ENCODE measurements at regions of chr10 and their contacts with region 1.

Region 1: GRCh38 chr10:89263531-89263930 is 12.0 kb upstream of the LIPA start:
- DNase-seq: no peak
- H3K4me3 ChIP-seq: no peak overlapping the region
- H3K27ac ChIP-seq: peak overlapping the region in 1 of 2 experiments; percentile 75; a peak in 3 of 4 replicates
- H3K4me1 ChIP-seq: peaks cover 5 to 26% of the 10 kb centered on the region in 2 experiments
- H3K27me3 ChIP-seq: no peaks in the 10 kb centered on the region
- CTCF ChIP-seq: no peak
- EP300 ChIP-seq: no peak
- RAD21 ChIP-seq: no peak

Region 2: DNA sequence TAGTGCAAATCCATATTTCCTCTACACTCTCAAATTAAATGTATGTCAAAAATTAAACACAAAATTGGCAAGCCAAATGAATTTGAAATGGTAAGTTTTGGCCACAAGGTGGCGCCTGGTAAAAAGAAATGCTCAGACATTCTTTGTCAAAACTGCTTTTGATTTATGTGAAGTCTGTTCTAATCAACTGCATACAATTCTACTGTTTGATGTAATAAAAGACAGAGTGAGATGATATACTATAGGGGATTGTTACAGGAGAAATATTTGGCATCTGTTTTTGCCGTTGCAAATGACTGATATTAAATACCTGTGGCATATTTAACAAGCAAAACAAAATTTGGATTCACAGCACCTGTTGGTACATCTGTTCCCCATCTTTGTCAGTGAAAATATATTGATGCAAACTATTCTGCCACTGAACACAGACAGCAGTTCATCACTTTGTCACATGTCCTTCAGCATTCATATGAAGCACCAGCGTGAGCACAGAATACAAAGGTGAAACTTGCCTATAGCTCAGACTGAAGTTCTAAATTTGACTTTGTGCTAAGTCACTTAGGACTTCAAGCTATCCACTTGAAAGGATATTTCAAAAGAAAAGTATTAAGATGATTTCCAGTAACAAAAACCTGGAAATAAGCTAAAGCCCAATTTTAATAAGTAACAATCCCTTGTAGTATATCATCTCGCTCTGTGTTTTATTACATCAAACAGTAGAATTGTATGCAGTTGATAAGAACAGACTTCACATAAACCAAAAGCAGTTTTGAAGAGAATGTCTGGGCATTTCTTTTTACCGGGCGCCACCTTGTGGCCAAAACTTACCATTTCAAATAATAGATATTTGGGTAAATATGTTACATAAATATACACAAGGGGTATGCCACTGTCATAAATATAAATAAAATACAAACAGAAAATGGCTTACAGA is 46.2 kb before region 1 on chr10:
- CTCF ChIA-PET with region 1: no interaction called
- POLR2A ChIA-PET with region 1: no interaction called
- DNase-seq: peak; percentile 30
- H3K4me3 ChIP-seq: no peak overlapping the region; a peak in 1 of 4 replicates
- H3K27ac ChIP-seq: peak overlapping the region; percentile 30 to 55
- H3K4me1 ChIP-seq: peaks cover 4 to 14% of the 10 kb centered on the region in 2 experiments; a peak in 3 of 4 replicates
- H3K27me3 ChIP-seq: no peaks in the 10 kb centered on the region
- CTCF ChIP-seq: peak; percentile 91
- EP300 ChIP-seq: no peak
- RAD21 ChIP-seq: peak; percentile 78

Region 3: DNA sequence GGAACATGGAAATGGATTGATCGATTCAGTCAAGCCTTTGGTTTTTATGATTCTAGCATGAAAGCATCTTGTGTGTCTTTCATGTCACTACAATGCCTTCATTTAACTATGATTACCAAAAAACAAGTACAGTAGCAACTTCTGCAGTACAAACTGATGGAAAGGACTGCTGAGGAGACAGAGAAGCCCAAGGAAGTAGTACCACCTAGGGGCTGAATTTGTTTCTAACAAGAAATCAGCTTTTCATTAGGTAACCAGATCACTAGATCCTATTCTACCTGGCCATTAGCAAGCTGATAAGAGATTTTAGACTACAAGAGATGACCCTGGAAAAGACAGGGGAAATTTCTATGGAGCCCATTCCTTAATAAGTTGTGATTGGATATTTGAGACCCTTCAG is 125.7 kb after region 1 on chr10:
- CTCF ChIA-PET with region 1: interaction called, 13 read pairs
- POLR2A ChIA-PET with region 1: no interaction called
- DNase-seq: peak; percentile 41
- H3K4me3 ChIP-seq: no peak overlapping the region; a peak in 1 of 4 replicates
- H3K27ac ChIP-seq: no peak overlapping the region
- H3K4me1 ChIP-seq: peaks cover 2 to 13% of the 10 kb centered on the region in 2 experiments; a peak in 2 of 4 replicates
- H3K27me3 ChIP-seq: no peaks in the 10 kb centered on the region
- CTCF ChIP-seq: peak; percentile 64
- EP300 ChIP-seq: no peak
- RAD21 ChIP-seq: peak; percentile 83

Measured in SK-N-SH (cell line).